ENCODE measurements at regions of chr1 and their contacts with region 1.

Region 1: DNA sequence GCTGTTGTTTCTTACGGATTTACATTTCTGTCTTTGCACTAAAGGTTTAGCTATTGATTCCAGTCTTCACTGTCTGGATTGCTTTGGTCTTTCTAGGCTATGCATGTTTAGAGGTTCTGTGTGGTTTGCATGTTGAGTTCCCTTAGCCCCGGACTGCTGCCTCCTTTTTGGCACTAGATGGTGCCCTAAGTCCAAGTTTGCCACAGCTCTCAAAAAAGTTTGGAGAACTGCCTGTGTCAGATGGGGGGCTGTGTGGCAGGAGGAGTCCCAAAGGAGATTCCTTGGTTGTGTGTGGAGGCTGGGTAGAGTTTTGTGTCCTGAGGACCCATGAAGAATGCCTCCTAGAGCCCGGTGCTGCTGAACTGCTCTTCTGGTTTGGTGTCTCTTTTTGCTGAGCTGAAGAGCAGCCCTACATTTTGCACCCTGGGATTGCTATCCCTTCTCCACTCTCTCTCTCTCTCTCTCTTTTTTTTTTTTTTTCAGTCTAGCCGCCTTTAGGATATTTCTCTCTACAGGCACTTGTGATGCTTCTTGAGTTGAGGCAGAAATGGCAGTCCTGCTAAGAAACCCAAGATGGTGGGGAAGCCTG is 74.4 kb downstream of the PTGS2 start:
- DNase-seq: peak; percentile 41 to 63
- H3K4me3 ChIP-seq: no peak overlapping the region
- H3K27ac ChIP-seq: no peak overlapping the region
- H3K4me1 ChIP-seq: peaks cover 0 to 4% (median under 1%) of the 10 kb centered on the region in 4 experiments; a peak in 3 of 7 replicates
- H3K27me3 ChIP-seq: no peaks in the 10 kb centered on the region
- CTCF ChIP-seq: peak; percentile 69 to 89 (median 86)
- EP300 ChIP-seq: no peak
- POLR2A ChIP-seq: no peak
- RAD21 ChIP-seq: peak; percentile 98

Region 2: GRCh38 chr1:186541017-186541416 is 64.8 kb before region 1 on chr1:
- CTCF ChIA-PET with region 1: no interaction called
- POLR2A ChIA-PET with region 1: no interaction called
- DNase-seq: no peak
- H3K4me3 ChIP-seq: no peak overlapping the region
- H3K27ac ChIP-seq: no peak overlapping the region
- H3K4me1 ChIP-seq: no peaks in the 10 kb centered on the region
- H3K27me3 ChIP-seq: no peaks in the 10 kb centered on the region
- CTCF ChIP-seq: peak; percentile 18 to 24 (median 23); a peak in 3 of 4 replicates
- EP300 ChIP-seq: no peak
- POLR2A ChIP-seq: no peak
- RAD21 ChIP-seq: no peak

Region 3: DNA sequence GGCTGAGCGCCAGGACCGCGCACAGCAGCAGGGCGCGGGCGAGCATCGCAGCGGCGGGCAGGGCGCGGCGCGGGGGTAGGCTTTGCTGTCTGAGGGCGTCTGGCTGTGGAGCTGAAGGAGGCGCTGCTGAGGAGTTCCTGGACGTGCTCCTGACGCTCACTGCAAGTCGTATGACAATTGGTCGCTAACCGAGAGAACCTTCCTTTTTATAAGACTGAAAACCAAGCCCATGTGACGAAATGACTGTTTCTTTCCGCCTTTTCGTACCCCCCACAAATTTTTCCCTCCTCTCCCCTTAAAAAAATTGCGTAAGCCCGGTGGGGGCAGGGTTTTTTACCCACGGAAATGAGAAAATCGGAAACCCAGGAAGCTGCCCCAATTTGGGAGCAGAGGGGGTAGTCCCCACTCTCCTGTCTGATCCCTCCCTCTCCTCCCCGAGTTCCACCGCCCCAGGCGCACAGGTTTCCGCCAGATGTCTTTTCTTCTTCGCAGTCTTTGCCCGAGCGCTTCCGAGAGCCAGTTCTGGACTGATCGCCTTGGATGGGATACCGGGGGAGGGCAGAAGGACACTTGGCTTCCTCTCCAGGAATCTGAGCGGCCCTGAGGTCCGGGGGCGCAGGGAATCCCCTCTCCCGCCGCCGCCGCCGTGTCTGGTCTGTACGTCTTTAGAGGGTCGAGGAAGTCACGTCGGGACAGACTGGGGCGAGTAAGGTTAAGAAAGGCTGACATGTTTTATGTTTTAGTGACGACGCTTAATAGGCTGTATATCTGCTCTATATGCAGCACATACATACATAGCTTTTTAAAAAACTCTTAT is 74.6 kb after region 1 on chr1 and contains the start of gene PTGS2:
- CTCF ChIA-PET with region 1: interaction called, 37 read pairs
- POLR2A ChIA-PET with region 1: no interaction called
- DNase-seq: peak; percentile 71 to 83
- H3K4me3 ChIP-seq: peak within 1 kb of the TSS; percentile 66 to 82 (median 76)
- H3K27ac ChIP-seq: no peak within 1 kb of the TSS
- H3K4me1 ChIP-seq: peaks cover 0 to 2% (median 0%) of the 10 kb centered on the region in 4 experiments; a peak in 2 of 7 replicates
- H3K27me3 ChIP-seq: peaks cover 0 to 3% (median under 1%) of the 10 kb centered on the region in 4 experiments; a peak in 1 of 7 replicates
- CTCF ChIP-seq: peak; percentile 53 to 71 (median 71)
- EP300 ChIP-seq: no peak
- POLR2A ChIP-seq: peak in 1 of 2 experiments; percentile 47; a peak in 2 of 3 replicates
- RAD21 ChIP-seq: peak; percentile 55 to 56
- total RNA-seq, gene PTGS2: 0.23 and 0.35 TPM in 2 replicates

Region 4: DNA sequence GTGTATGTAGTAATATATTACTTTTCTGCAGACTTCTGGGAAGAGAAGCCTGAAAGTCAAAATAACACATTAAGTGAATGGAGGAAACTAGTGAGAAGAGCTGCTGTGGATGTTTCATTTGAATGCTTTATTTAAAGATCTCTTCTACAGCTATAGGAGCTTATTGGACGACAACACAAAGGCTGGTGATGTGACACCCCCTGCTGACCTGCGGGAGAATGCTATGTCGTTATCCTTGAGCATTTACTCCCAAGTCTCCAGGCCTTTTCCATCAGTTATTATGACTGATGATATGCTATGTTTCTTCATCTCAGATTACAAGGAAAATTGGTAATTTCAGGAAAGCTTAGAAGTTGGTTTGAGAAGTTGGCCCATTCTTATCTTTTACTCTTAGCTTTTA is 200.6 kb after region 1 on chr1:
- CTCF ChIA-PET with region 1: interaction called, 11 read pairs
- POLR2A ChIA-PET with region 1: no interaction called
- DNase-seq: no peak
- H3K4me3 ChIP-seq: no peak overlapping the region
- H3K27ac ChIP-seq: no peak overlapping the region
- H3K4me1 ChIP-seq: no peaks in the 10 kb centered on the region
- H3K27me3 ChIP-seq: no peaks in the 10 kb centered on the region
- CTCF ChIP-seq: peak in 2 of 3 experiments; percentile 17 to 30; a peak in 2 of 4 replicates
- EP300 ChIP-seq: no peak
- POLR2A ChIP-seq: no peak
- RAD21 ChIP-seq: peak; percentile 41 to 50

Region 5: GRCh38 chr1:186985889-186986491 is 380.1 kb after region 1 on chr1:
- CTCF ChIA-PET with region 1: interaction called, 28 read pairs
- POLR2A ChIA-PET with region 1: no interaction called
- DNase-seq: no peak
- H3K4me3 ChIP-seq: no peak overlapping the region
- H3K27ac ChIP-seq: no peak overlapping the region
- H3K4me1 ChIP-seq: 0 out of 7 replicates have a peak, but pooled peaks cover 0 to 2% (median 0%) of the 10 kb centered on the region in 4 experiments
- H3K27me3 ChIP-seq: no peaks in the 10 kb centered on the region
- CTCF ChIP-seq: peak in 2 of 3 experiments; percentile 69 to 70; a peak in 3 of 4 replicates
- EP300 ChIP-seq: no peak
- POLR2A ChIP-seq: no peak
- RAD21 ChIP-seq: peak; percentile 95 to 96